ENCODE measurements at regions of chr12 and their contacts with region 1.

Region 1: DNA sequence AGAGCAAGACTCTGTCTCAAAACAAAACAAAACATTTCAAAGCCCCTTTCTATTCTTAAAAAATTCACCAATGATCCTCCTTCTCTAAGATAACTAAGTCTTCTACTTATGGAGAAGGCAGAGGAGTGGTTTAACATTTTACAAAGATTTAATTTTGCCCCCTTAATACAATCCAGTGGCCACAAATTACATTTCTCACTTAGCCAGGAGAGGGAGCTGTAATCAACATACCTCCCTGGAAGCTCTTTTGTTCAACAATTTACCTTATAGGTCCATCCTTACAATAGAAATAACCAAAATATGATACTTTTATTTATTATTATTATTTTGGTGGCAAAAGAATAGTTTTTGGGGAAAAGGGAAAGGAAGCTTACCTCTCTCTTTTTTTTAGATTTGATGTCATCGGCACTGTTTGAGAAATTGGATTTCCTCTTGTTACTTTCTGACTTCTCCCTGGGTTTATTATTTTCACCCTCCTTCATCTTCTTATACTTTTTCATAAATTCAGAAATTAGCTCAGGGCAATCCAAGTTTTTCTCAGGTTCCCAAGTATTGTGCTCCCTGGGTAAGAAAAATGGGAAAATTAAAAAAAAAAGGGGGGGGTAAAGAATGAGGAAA is 28.1 kb downstream of the CBX5 start:
- DNase-seq: peak; percentile 73
- H3K4me3 ChIP-seq: no peak overlapping the region
- H3K27ac ChIP-seq: peak overlapping the region in 1 of 2 experiments; percentile 43; a peak in 2 of 4 replicates
- H3K4me1 ChIP-seq: peaks cover 0 to 4% of the 10 kb centered on the region in 2 experiments; a peak in 2 of 4 replicates
- H3K27me3 ChIP-seq: no peaks in the 10 kb centered on the region
- CTCF ChIP-seq: peak; percentile 87
- EP300 ChIP-seq: no peak
- RAD21 ChIP-seq: peak; percentile 78

Region 2: GRCh38 chr12:54220092-54220557 is 31.7 kb before region 1 on chr12:
- CTCF ChIA-PET with region 1: interaction called, 36 read pairs
- POLR2A ChIA-PET with region 1: no interaction called
- DNase-seq: peak; percentile 75
- H3K4me3 ChIP-seq: no peak overlapping the region; a peak in 1 of 4 replicates
- H3K27ac ChIP-seq: no peak overlapping the region
- H3K4me1 ChIP-seq: peaks cover 3 to 14% of the 10 kb centered on the region in 2 experiments; a peak in 3 of 4 replicates
- H3K27me3 ChIP-seq: no peaks in the 10 kb centered on the region
- CTCF ChIP-seq: peak; percentile 88
- EP300 ChIP-seq: no peak
- RAD21 ChIP-seq: peak; percentile 84

Region 3: GRCh38 chr12:54240971-54241588 is 10.7 kb before region 1 on chr12:
- CTCF ChIA-PET with region 1: interaction called, 24 read pairs
- POLR2A ChIA-PET with region 1: no interaction called
- DNase-seq: no peak
- H3K4me3 ChIP-seq: no peak overlapping the region
- H3K27ac ChIP-seq: no peak overlapping the region
- H3K4me1 ChIP-seq: no peaks in the 10 kb centered on the region
- H3K27me3 ChIP-seq: no peaks in the 10 kb centered on the region
- CTCF ChIP-seq: no peak
- EP300 ChIP-seq: no peak
- RAD21 ChIP-seq: no peak

Region 4: DNA sequence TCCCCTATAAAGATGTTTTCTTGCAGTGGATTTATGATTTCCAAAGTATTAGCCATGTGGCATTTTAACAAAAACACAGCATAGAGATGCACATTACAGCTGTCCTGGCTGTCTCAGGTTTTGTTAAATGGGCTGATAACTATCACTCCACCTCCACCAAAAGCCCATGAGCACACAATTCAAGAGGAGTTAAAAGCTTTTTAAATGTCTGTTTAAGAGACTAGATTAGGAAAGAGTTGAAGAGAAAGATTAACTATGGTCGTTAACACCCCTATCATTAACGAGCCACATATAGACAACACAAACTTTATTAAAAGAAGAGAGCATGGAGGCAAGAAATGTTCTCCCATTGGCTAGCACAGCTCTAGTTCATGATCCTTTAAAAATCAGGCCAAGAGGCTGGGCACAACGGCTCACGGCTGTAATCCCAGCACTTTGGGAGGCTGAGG is 13.6 kb after region 1 on chr12:
- CTCF ChIA-PET with region 1: interaction called, 12 read pairs
- POLR2A ChIA-PET with region 1: interaction called, 3 read pairs
- DNase-seq: peak; percentile 48
- H3K4me3 ChIP-seq: no peak overlapping the region
- H3K27ac ChIP-seq: peak overlapping the region; percentile 3 to 86; a peak in 3 of 4 replicates
- H3K4me1 ChIP-seq: peaks cover 14 to 31% of the 10 kb centered on the region in 2 experiments
- H3K27me3 ChIP-seq: no peaks in the 10 kb centered on the region
- CTCF ChIP-seq: no peak
- EP300 ChIP-seq: no peak
- RAD21 ChIP-seq: no peak

Region 5: DNA sequence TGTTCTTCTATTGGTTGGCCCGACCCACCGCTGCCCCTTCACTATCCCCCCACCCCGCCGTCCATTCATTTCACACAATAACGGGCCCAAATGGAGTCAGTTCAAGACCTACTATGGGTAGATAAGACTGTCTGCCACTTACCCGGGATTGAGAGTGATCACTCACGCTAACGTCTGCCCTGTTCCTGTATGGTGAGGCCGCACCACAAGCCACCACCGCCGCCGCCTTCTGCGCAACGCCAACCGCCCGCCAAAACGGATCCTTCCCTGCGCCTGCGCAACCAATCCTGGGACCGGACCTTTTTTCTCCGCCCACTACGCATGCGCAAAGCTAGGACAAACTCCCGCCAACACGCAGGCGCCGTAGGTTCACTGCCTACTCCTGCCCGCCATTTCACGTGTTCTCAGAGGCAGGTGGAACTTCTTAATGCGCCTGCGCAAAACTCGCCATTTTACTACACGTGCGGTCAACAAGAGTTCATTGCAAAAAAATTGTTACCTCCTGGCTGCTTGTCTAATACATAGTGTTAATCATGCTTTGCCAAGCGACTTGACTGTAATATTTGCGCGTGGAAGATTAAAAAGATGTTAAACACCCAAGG is 28.2 kb after region 1 on chr12 and contains the start of gene CBX5:
- CTCF ChIA-PET with region 1: interaction called, 17 read pairs
- POLR2A ChIA-PET with region 1: interaction called, 14 read pairs
- DNase-seq: peak; percentile 92
- H3K4me3 ChIP-seq: peak within 1 kb of the TSS; percentile 80 to 88
- H3K27ac ChIP-seq: peak within 1 kb of the TSS; percentile 93 to 99
- H3K4me1 ChIP-seq: peaks cover 15 to 26% of the 10 kb centered on the region in 2 experiments; a peak in 3 of 4 replicates
- H3K27me3 ChIP-seq: no peaks in the 10 kb centered on the region
- CTCF ChIP-seq: no peak
- EP300 ChIP-seq: peak in 1 of 2 experiments; percentile 4; a peak in 1 of 4 replicates
- RAD21 ChIP-seq: no peak
- polyA plus RNA-seq, gene CBX5: 11.6 and 14.1 TPM in 2 replicates

Region 6: GRCh38 chr12:54285150-54286041 is 33.6 kb after region 1 on chr12:
- CTCF ChIA-PET with region 1: interaction called, 17 read pairs
- POLR2A ChIA-PET with region 1: interaction called, 14 read pairs
- DNase-seq: no peak
- H3K4me3 ChIP-seq: peak overlapping the region; percentile 24 to 80; a peak in 3 of 4 replicates
- H3K27ac ChIP-seq: peak overlapping the region; percentile 21 to 36; a peak in 3 of 4 replicates
- H3K4me1 ChIP-seq: peaks cover 13 to 25% of the 10 kb centered on the region in 2 experiments; a peak in 3 of 4 replicates
- H3K27me3 ChIP-seq: no peaks in the 10 kb centered on the region
- CTCF ChIP-seq: peak; percentile 54
- EP300 ChIP-seq: no peak
- RAD21 ChIP-seq: peak; percentile 17; the same call in 1 of the 2 replicates

Region 7: DNA sequence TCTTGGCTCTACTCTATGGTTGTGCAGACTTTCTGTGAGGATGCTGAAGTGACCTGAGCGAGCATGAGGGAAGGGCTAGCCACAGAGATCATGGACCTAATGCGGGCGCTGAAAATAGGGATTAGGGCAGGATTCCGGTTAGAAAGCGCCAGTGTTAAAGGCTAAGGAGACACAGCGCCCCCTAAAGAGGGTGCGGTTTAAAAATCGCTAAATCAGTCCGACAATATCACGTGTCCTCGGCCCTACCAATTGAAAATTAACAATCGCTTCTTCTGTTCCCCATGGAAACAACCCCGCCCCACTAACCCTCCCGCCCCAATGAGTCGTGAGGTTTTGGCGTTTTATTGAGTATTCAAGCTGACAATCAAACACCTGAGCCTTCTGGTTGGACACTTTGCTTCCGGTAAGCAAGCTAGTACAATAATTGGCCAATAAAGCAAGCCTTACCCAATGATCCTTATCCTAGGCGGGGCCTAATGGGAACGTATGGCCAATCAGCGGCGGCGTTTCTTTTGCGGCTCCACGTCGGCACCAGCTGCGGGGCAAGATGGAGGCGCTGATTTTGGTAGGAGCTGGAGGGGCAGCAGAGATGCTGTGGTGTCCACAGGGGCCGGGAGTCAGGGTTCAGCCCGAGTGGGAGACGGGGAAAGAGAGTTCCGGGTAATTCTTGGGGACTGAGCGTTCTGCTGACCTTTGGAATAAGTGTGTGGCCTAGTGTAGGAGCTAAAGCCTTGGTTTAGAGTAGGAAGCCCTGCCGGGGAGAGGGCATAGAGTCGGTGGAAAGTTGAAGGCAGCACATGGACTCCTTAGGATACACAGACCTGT is 73.1 kb after region 1 on chr12 and contains the start of gene COPZ1:
- CTCF ChIA-PET with region 1: interaction called, 26 read pairs
- POLR2A ChIA-PET with region 1: interaction called, 3 read pairs
- DNase-seq: peak; percentile 90
- H3K4me3 ChIP-seq: peak within 1 kb of the TSS; percentile 68 to 86
- H3K27ac ChIP-seq: peak within 1 kb of the TSS; percentile 77 to 81
- H3K4me1 ChIP-seq: peaks cover 0 to 9% of the 10 kb centered on the region in 2 experiments; a peak in 2 of 4 replicates
- H3K27me3 ChIP-seq: no peaks in the 10 kb centered on the region
- CTCF ChIP-seq: peak; percentile 84
- EP300 ChIP-seq: 0 out of 4 replicates have a peak, but pooled peaks of 1 of the 2 experiments have one; percentile 35
- RAD21 ChIP-seq: peak; percentile 80
- polyA plus RNA-seq, gene COPZ1: 111 and 156 TPM in 2 replicates

Measured in SK-N-SH (cell line).